A549 (cell line): ENCODE measurements at regions of chr17 and their contacts with region 1.

Region 1: DNA sequence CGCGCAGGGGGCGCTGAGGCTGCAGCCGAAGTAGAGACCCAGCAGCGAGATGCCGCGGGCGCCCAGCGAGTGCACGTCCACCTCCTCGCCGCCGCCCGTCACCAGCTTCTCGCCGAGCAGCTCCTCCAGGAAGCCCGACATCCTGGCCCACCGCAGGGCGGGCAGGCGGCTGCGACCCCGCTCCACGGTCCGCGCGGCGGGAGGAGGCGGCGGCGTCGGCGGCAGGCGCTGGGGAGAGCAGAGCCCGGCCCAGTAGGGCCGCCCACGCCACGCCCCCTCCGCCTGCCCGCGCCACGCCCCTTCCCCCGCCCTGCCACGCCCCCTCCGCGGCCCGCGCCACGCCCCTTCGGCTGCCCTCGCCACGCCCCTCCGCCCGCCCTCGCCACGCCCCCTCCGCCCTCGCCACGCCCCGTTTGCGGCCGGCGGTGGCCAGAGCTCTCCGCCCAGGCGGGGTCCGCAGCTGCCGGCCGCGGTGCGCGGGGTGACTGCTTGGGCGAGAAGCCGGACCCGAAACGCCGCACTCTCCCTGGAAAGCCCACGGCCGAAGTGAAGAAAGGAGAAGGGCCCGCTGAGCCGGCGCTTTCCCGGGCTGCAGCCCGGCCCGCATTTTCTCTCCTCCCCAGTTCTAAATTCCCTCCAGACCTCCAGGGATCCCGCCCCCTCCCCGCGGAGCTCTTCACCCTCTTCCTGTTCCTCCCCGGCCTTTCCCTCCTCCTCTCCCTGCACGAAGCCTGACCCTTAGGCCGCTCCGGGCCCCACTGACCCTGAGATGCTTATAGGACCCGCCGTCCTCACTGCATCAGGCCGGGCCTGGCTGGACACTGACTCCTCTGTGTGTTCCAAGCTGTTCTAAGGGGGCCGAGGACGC is at the start of gene NXN:
- DNase-seq: peak; percentile 65 to 82
- ATAC-seq: peak; percentile 76 to 85
- H3K4me3 ChIP-seq: peak within 1 kb of the TSS; percentile 89
- H3K27ac ChIP-seq: peak within 1 kb of the TSS; percentile 76 to 91
- H3K4me1 ChIP-seq: peaks cover 16% of the 10 kb centered on the region; the same call in 2 of the 3 replicates
- CTCF ChIP-seq: peak; percentile 48
- EP300 ChIP-seq: no peak
- POLR2A ChIP-seq: peak; percentile 72
- RAD21 ChIP-seq: peak; percentile 19 to 56; a peak in 3 of 5 replicates
- polyA plus RNA-seq, gene NXN: 22.2 and 24.6 TPM in 2 replicates

Region 2: DNA sequence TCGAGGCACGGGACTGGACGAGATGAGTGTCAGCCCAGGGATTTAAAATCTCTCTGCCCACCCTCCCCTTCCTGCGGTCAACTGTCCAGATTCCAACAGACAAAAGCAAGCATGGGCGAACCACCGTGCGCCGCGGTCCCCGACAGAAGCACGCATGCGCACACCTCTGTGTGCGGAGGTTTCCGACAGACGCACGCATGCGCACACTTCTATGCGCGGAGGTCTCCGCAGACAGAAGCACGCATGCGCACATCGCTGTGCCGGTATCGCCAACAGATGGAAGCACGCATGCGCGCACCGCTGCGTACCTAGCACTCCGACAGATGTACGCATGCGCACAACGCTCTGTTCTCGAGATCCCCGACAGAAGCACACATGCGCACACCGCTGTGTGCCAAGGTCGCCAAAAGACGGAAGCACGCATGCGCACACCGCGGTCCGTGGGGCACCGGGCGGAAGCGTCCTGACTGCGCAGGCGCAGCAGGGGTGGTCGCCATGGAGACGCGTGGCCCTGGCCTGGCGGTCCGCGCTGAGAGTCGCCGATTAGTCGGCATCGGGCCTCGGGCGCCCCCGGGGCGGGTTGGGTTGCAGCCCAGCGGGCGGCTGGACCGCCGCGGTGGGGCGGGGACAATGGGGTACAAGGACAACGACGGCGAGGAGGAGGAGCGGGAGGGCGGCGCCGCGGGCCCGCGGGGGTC is 569.8 kb before region 1 on chr17:
- CTCF ChIA-PET with region 1: interaction called, 20 read pairs
- POLR2A ChIA-PET with region 1: interaction called, 3 read pairs
- DNase-seq: peak; percentile 100
- ATAC-seq: peak; percentile 81 to 93
- H3K4me3 ChIP-seq: peak overlapping the region; percentile 70
- H3K27ac ChIP-seq: peak overlapping the region; percentile 76 to 90
- H3K4me1 ChIP-seq: peaks cover 21% of the 10 kb centered on the region
- CTCF ChIP-seq: no peak
- EP300 ChIP-seq: no peak
- POLR2A ChIP-seq: peak; percentile 95
- RAD21 ChIP-seq: no peak

Region 3: GRCh38 chr17:781805-782731 is 197.7 kb before region 1 on chr17 and contains the starts of genes GLOD4 and MRM3:
- CTCF ChIA-PET with region 1: interaction called, 428 read pairs
- POLR2A ChIA-PET with region 1: interaction called, 25 read pairs
- DNase-seq: peak; percentile 91 to 95
- ATAC-seq: peak; percentile 95 to 96
- H3K4me3 ChIP-seq: peak within 1 kb of the TSS; percentile 96
- H3K27ac ChIP-seq: peak within 1 kb of the TSS; percentile 89 to 91
- H3K4me1 ChIP-seq: peaks cover 22% of the 10 kb centered on the region
- CTCF ChIP-seq: no peak
- EP300 ChIP-seq: no peak
- POLR2A ChIP-seq: peak; percentile 96
- RAD21 ChIP-seq: no peak
- polyA plus RNA-seq, gene GLOD4: 98.3 and 133 TPM in 2 replicates
- polyA plus RNA-seq, gene MRM3: 27.1 and 38.8 TPM in 2 replicates

Region 4: GRCh38 chr17:861364-861763 is 118.4 kb before region 1 on chr17:
- CTCF ChIA-PET with region 1: interaction called, 17 read pairs
- POLR2A ChIA-PET with region 1: no interaction called
- DNase-seq: no peak
- ATAC-seq: no peak
- H3K4me3 ChIP-seq: no peak overlapping the region
- H3K27ac ChIP-seq: no peak overlapping the region
- H3K4me1 ChIP-seq: no peaks in the 10 kb centered on the region
- CTCF ChIP-seq: no peak
- EP300 ChIP-seq: no peak
- POLR2A ChIP-seq: no peak
- RAD21 ChIP-seq: no peak

Region 5: GRCh38 chr17:892958-893357 is 86.8 kb before region 1 on chr17:
- CTCF ChIA-PET with region 1: interaction called, 16 read pairs
- POLR2A ChIA-PET with region 1: no interaction called
- DNase-seq: no peak
- ATAC-seq: no peak
- H3K4me3 ChIP-seq: no peak overlapping the region
- H3K27ac ChIP-seq: no peak overlapping the region
- H3K4me1 ChIP-seq: no peaks in the 10 kb centered on the region
- CTCF ChIP-seq: no peak
- EP300 ChIP-seq: no peak
- POLR2A ChIP-seq: no peak
- RAD21 ChIP-seq: no peak

Region 6: DNA sequence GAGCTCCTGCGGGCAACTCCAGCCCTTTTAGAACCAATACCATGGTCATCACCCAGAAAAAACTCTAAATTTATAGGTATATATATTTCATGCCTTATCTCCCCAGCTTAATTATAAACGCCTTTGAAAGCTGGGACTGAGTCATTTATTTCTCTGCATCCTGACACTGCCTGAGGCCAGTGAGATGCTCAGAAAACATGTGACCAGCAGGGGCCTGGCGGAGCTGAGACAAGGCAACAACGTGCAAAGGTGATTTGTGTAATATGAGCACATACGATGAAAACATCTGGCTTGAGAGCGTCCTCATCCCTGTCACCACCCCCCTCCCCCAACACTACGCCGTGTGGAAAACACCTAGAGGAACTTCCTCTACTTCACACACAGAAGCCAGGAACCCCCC is 22.9 kb before region 1 on chr17:
- CTCF ChIA-PET with region 1: interaction called, 30 read pairs
- POLR2A ChIA-PET with region 1: interaction called, 5 read pairs
- DNase-seq: peak; percentile 69 to 70
- ATAC-seq: peak; percentile 19 to 54; a peak in 4 of 6 replicates
- H3K4me3 ChIP-seq: no peak overlapping the region
- H3K27ac ChIP-seq: peak overlapping the region in 1 of 2 experiments; percentile 90; a peak in 3 of 6 replicates
- H3K4me1 ChIP-seq: peaks cover 42% of the 10 kb centered on the region
- CTCF ChIP-seq: no peak
- EP300 ChIP-seq: no peak
- POLR2A ChIP-seq: no peak
- RAD21 ChIP-seq: no peak